ENCODE measurements at regions of chr11 and their contacts with region 1.

Region 1: GRCh38 chr11:65506770-65507505 is 8.1 kb downstream of the MALAT1 start:
- DNase-seq: peak; percentile 91
- ATAC-seq: peak; percentile 60
- H3K4me3 ChIP-seq: peak overlapping the region; percentile 7 to 17; a peak in 1 of 4 replicates
- H3K27ac ChIP-seq: peak overlapping the region; percentile 83
- H3K4me1 ChIP-seq: peaks cover 50 to 80% of the 10 kb centered on the region in 2 experiments
- H3K27me3 ChIP-seq: no peaks in the 10 kb centered on the region
- CTCF ChIP-seq: no peak
- POLR2A ChIP-seq: peak; percentile 54
- RAD21 ChIP-seq: no peak

Region 2: DNA sequence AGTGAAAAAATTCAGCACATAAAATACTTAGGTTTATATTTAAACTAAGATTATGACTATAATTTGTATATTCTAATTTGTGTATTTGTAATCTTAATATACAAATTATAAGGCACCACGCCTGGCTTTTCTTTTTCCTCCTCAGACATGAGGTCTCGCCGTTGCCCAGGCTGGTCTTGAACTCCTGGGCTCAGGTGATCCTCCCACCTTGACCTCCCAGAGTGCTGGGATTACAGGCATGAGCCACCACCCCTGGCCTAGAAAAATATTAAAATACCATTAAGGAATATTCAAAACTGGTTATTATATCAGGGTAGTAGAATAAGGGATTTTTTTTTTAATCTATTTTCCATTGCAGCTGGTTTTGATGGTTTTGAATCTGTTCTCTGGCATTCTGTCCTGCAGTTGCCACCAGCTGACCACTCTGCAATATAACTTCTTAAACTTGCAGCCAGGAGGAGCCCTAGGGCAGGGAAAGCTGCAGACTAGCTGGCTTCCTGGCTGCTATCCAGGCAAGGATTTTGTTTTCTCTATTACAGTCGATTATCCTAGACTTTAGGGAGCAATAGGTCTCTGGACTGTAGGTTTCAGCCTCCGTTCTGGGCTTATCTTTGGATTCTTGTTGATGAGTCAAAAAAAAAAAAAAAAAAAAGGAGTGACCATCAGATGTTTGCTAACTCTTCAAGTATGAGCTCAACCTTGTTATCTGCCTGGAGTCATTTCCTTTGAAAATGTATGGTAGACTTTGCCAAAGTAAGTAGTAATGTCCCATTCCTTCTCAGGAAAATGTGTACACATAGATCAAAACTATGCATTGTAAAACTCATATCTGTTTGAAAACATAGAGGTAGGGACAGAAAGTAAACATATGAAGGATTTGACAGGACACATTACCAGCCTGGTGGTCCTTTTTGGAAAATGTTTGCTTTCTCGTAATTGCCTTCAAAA is 231.9 kb before region 1 on chr11:
- CTCF ChIA-PET with region 1: interaction called, 16 read pairs
- POLR2A ChIA-PET with region 1: interaction called, 5 read pairs
- RAD21 ChIA-PET with region 1: no interaction called
- intact Hi-C with region 1: loop called (anchors 1 kb)
- DNase-seq: peak; percentile 68
- ATAC-seq: peak; percentile 71
- H3K4me3 ChIP-seq: no peak overlapping the region
- H3K27ac ChIP-seq: no peak overlapping the region
- H3K4me1 ChIP-seq: peaks cover 20 to 38% of the 10 kb centered on the region in 2 experiments
- H3K27me3 ChIP-seq: no peaks in the 10 kb centered on the region
- CTCF ChIP-seq: peak; percentile 67 to 97 (median 82); a peak in 5 of 6 replicates
- POLR2A ChIP-seq: no peak
- RAD21 ChIP-seq: peak; percentile 99

Region 3: GRCh38 chr11:65366340-65366773 is 140.6 kb before region 1 on chr11:
- CTCF ChIA-PET with region 1: interaction called, 7 read pairs
- POLR2A ChIA-PET with region 1: interaction called, 10 read pairs
- RAD21 ChIA-PET with region 1: no interaction called
- intact Hi-C with region 1: loop called (anchors 1 kb)
- DNase-seq: peak; percentile 67
- ATAC-seq: peak; percentile 90
- H3K4me3 ChIP-seq: no peak overlapping the region
- H3K27ac ChIP-seq: no peak overlapping the region
- H3K4me1 ChIP-seq: peaks cover 6 to 10% of the 10 kb centered on the region in 2 experiments; a peak in 3 of 4 replicates
- H3K27me3 ChIP-seq: no peaks in the 10 kb centered on the region
- CTCF ChIP-seq: peak; percentile 62 to 85 (median 66)
- POLR2A ChIP-seq: no peak
- RAD21 ChIP-seq: peak; percentile 95

Region 4: DNA sequence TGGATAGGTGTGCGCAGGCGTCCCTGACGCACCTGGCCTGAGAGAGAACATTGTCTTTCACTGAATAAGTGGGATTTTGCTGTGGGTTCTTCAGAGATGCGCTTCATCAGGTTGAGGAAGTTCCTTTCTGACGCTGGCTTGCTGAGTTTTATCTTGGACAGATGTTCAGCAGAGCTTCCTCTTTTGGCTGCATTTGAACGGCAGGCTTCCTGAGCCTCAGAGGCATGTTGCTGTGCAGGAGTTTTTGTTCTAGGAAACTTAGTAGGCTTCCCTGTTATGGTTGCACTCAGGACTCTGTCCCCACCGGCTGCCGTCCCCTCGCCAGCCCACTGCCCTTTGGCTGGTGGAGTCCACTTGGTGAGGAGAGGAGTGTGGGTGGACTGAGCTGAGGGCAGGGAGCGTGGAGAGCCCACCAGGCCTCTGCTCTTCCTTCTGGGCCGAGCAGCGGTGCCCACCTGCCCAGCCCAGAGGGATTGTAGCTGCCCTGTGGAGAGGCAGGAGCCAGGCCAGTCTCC is 103.3 kb before region 1 on chr11:
- CTCF ChIA-PET with region 1: no interaction called
- POLR2A ChIA-PET with region 1: no interaction called
- RAD21 ChIA-PET with region 1: no interaction called
- intact Hi-C with region 1: no loop called
- DNase-seq: no peak
- ATAC-seq: no peak
- H3K4me3 ChIP-seq: no peak overlapping the region
- H3K27ac ChIP-seq: no peak overlapping the region
- H3K4me1 ChIP-seq: no peaks in the 10 kb centered on the region
- H3K27me3 ChIP-seq: no peaks in the 10 kb centered on the region
- CTCF ChIP-seq: no peak
- POLR2A ChIP-seq: no peak
- RAD21 ChIP-seq: no peak

Region 5: GRCh38 chr11:65418711-65419459 is 88.1 kb before region 1 on chr11:
- CTCF ChIA-PET with region 1: interaction called, 37 read pairs
- POLR2A ChIA-PET with region 1: interaction called, 910 read pairs
- RAD21 ChIA-PET with region 1: interaction called, 4 to 5 read pairs
- intact Hi-C with region 1: loop called (anchors 1 kb)
- DNase-seq: peak; percentile 84
- ATAC-seq: peak; percentile 59
- H3K4me3 ChIP-seq: peak overlapping the region; percentile 40 to 56
- H3K27ac ChIP-seq: peak overlapping the region; percentile 100
- H3K4me1 ChIP-seq: peaks cover 53 to 84% of the 10 kb centered on the region in 2 experiments
- H3K27me3 ChIP-seq: no peaks in the 10 kb centered on the region
- CTCF ChIP-seq: no peak
- POLR2A ChIP-seq: peak; percentile 87
- RAD21 ChIP-seq: no peak

Region 6: DNA sequence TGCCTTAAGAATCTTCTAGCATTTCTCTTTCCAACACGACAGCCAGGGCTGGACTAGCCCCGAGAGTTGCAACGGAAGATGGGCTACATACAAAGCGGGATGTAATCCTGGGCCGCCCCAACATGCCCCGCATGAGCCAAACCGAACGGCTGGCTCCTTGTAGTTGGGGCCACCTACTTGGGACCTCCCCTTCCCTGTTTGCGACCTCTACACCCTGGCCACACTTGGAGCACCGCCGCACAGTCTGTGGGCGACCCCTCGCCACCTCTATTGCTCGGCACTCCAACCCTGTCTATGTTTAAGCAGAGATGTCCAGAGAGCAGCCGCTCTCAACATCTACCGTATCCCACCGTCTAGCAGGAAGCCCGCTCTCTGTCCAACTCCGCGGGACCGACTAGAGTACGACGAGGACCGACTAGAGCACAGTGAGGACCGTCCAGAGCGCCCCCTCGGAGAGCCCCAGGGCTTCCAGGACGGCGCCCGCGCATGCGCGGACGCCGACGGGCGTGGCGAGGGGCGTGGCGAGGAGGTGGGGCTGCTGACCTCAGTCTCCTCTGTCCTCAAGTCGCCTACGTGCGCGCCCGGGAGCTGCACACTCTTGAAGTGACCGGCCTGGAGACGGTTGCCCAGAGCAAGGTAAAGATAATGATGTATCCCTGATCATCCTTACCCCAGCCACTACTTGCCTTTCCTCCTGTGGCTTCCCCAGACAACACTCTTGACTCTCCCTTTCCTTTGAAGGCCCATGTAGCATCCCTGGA is 52.1 kb before region 1 on chr11:
- CTCF ChIA-PET with region 1: no interaction called
- POLR2A ChIA-PET with region 1: interaction called, 15 read pairs
- RAD21 ChIA-PET with region 1: interaction called in 1 of 2 experiments, 4 read pairs
- intact Hi-C with region 1: no loop called
- DNase-seq: peak; percentile 85
- ATAC-seq: peak; percentile 85
- H3K4me3 ChIP-seq: peak overlapping the region; percentile 73 to 76
- H3K27ac ChIP-seq: peak overlapping the region; percentile 94
- H3K4me1 ChIP-seq: peaks cover 40 to 51% of the 10 kb centered on the region in 2 experiments
- H3K27me3 ChIP-seq: no peaks in the 10 kb centered on the region
- CTCF ChIP-seq: 0 out of 6 replicates have a peak, but pooled peaks of 1 of the 3 experiments have one; percentile 17
- POLR2A ChIP-seq: peak; percentile 94
- RAD21 ChIP-seq: no peak

Region 7: DNA sequence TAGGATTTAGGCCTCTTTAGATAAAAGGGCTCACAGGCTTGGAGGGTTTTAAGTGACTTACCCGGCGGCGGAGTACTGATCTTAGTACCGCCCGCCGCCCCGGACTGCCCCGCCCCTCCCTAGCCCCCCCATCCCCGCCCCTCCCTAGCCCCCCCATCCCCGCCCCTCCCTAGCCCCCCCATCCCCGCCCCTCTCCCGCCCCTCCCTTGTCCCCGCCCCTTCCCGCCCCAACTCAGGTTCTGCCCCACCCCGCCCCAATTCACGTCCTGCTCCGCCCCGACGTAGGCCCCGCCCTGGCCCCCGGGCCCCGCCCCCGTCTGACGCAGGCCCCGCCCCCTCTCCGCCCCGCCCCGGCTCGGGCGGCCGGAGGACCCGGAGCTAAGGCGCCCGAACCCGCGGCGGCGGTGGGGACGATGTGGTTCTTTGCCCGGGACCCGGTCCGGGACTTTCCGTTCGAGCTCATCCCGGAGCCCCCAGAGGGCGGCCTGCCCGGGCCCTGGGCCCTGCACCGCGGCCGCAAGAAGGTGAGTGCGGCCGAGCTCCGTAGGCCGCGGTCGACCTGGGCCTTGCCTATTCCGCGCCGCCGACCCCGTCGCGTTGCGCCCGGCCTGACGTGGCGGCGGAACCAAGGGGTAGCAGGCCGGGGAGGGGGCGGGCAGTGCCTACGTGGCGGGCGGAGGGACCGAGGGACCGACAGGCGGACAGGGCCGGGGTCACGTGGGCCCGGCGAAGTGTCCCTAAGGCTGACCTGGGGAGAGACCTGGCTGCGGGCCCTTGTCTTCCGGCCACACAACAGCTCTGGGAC is 18.0 kb after region 1 on chr11 and contains the start of gene SCYL1:
- CTCF ChIA-PET with region 1: no interaction called
- POLR2A ChIA-PET with region 1: interaction called, 11 read pairs
- RAD21 ChIA-PET with region 1: no interaction called
- intact Hi-C with region 1: no loop called
- DNase-seq: no peak
- ATAC-seq: peak; percentile 91
- H3K4me3 ChIP-seq: peak within 1 kb of the TSS; percentile 90 to 94
- H3K27ac ChIP-seq: peak within 1 kb of the TSS; percentile 86
- H3K4me1 ChIP-seq: peaks cover 7 to 17% of the 10 kb centered on the region in 2 experiments; a peak in 3 of 4 replicates
- H3K27me3 ChIP-seq: no peaks in the 10 kb centered on the region
- CTCF ChIP-seq: no peak
- POLR2A ChIP-seq: no peak
- RAD21 ChIP-seq: no peak
- total RNA-seq, gene SCYL1: 104 TPM

Measured in HCT116 (cell line).